ENCODE measurements at regions of chr10 and their contacts with region 1.

Region 1: GRCh38 chr10:100286051-100287033 is at the start of gene BLOC1S2:
- DNase-seq: peak; percentile 91
- H3K4me3 Mint-ChIP-seq: peak within 1 kb of the TSS; percentile 98
- H3K27ac Mint-ChIP-seq: peak within 1 kb of the TSS; percentile 99
- H3K4me1 Mint-ChIP-seq: peaks cover 23% of the 10 kb centered on the region
- H3K27me3 Mint-ChIP-seq: peaks cover 1% of the 10 kb centered on the region
- total RNA-seq, gene BLOC1S2: 50.5 to 51.5 TPM

Region 2: DNA sequence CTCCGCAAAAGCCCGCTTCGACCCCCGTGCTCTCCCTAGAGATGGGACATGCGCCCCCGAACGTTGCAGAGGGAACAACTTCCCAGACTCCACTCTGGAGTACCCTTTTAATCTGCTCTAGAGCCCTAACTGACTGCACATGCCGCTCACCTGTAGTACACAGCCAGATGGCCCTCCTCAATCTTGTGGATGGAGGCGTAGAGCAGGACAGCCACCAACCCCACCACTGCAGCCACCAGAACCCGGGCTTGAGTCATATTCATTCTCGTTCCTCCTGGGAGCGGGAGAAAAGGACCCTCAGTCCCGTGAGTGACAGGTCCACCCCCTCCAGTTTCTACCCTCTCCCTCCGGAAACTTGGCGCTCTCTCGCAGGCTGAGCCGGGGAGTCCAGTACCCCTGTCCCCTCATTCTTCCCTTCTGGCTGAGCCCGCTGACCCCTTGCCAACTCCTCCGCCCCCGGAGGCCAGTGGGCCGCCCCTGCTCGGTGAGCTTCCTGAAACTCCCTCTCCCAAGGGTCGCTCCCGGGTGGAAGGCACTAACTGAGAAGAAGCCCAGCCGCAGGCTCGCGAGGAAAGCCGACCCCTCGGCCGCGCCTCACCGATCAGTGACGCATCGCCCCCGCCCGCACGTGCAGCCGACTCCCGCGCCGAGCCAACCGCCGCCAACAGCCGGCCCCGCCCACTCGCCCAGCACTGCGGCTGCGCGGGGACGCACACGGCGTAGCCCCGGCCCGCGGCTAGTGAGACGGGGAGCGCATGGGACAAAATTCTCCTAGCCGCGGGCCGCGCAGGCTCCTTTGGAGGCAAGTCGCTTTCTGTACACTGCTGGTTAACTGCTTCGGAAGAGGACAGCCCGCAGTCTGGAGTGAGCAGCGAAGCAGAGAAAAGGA is 100.7 kb before region 1 on chr10 and contains the start of gene ERLIN1:
- CTCF ChIA-PET with region 1: no interaction called
- POLR2A ChIA-PET with region 1: no interaction called
- intact Hi-C with region 1: loop called (anchors 5 kb)
- DNase-seq: peak; percentile 96
- H3K4me3 Mint-ChIP-seq: peak within 1 kb of the TSS; percentile 90
- H3K27ac Mint-ChIP-seq: peak within 1 kb of the TSS; percentile 92
- H3K4me1 Mint-ChIP-seq: peaks cover 55% of the 10 kb centered on the region
- H3K27me3 Mint-ChIP-seq: no peaks in the 10 kb centered on the region
- total RNA-seq, gene ERLIN1: 15.4 to 16.8 TPM

Region 3: GRCh38 chr10:100267237-100268104 is 18.9 kb before region 1 on chr10 and contains the start of gene CWF19L1:
- CTCF ChIA-PET with region 1: no interaction called
- POLR2A ChIA-PET with region 1: no interaction called
- intact Hi-C with region 1: loop called (anchors 1 kb)
- DNase-seq: peak; percentile 88
- H3K4me3 Mint-ChIP-seq: peak within 1 kb of the TSS; percentile 100
- H3K27ac Mint-ChIP-seq: peak within 1 kb of the TSS; percentile 98
- H3K4me1 Mint-ChIP-seq: peaks cover 22% of the 10 kb centered on the region
- H3K27me3 Mint-ChIP-seq: no peaks in the 10 kb centered on the region
- total RNA-seq, gene CWF19L1: 40.6 to 42.5 TPM

Region 4: DNA sequence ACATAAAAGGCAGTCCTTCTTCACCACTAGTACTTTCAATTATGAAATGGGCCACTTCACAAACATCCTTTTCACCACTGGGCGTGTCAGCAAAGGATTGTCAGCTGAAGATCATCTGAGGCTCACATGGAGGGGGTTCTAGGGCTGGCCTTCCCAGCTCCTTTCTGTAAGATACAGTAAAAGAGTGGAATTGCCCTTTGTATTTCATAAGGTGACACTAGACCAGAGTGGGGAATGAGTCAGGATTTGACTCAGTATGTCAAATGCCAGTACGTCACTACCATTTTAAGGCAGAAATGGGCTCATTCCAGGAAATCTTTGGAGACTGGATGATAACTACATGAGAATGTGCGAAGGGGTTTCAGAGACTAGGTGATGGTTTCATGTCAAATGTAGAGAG is 21.4 kb after region 1 on chr10:
- CTCF ChIA-PET with region 1: no interaction called
- POLR2A ChIA-PET with region 1: no interaction called
- intact Hi-C with region 1: no loop called
- DNase-seq: no peak
- H3K4me3 Mint-ChIP-seq: no peak overlapping the region
- H3K27ac Mint-ChIP-seq: no peak overlapping the region
- H3K4me1 Mint-ChIP-seq: no peaks in the 10 kb centered on the region
- H3K27me3 Mint-ChIP-seq: peaks cover 30% of the 10 kb centered on the region

Region 5: DNA sequence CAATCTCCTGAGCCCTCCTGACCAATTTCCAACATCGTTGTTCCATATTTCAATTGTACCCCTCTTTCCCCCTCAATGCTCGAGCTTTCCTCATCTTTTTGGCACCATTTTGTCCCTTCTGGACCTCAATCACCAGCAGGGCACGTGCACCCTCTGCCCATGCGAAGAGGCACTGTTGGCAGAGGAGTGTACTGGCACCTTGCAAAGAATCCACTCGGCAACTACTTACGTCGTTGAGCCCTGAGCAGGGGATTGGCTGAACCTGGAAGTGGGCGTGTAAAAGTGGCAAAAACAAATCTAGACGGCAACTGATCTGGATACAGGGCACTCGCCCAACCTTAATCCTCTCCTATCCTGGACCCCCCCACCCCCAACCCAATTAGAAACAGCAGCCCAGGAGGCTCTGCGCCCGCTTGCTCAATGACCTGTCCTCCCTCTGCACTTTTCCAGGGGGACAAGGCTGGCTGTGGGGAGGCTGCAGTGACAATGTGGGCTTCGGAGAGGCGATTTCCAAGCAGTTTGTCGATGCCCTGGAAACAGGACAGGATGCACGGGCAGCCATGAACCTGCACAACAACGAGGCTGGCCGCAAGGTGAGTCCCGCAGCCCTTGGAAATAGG is 195.2 kb after region 1 on chr10:
- CTCF ChIA-PET with region 1: interaction called, 6 read pairs
- POLR2A ChIA-PET with region 1: no interaction called
- intact Hi-C with region 1: loop called (anchors 5 kb)
- DNase-seq: peak; percentile 97
- H3K4me3 Mint-ChIP-seq: peak overlapping the region; percentile 74
- H3K27ac Mint-ChIP-seq: peak overlapping the region; percentile 6
- H3K4me1 Mint-ChIP-seq: peaks cover 12% of the 10 kb centered on the region
- H3K27me3 Mint-ChIP-seq: peaks cover 14% of the 10 kb centered on the region